Panc1 (cell line): ENCODE measurements at regions of chr6 and their contacts with region 1.

Region 1: DNA sequence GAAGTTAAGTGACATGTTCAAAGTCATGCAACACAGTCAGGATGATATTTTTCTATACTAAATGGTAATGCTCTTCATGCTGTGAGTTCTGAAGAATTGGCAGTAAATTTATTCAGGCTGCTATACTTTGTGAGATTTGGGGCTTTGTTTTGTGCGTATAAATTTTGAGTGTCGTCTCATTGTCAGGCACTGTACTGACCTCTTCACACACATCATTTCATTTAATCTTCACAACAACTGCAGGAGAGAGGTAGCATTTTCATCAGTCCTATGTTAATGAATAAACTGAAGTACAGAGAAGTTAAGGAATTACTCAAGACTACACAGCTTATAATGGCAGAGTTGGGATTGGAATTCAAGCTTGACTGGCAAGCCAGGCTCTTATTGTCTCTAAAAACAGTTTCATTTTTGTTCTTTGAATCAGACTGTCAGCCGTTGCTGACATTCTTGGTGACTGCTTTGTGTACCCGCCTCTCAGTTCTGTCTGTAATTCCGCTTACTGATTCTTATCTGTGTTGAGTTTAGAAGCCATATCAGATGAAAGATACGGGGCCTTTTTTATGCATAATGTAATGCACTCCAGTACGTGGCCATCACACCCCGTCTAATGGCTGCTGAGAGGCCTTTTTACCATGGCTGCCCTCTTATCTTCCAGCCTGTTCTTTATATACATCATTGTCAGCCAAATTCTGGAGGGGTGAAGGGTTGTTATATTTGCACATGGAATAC is 274.9 kb downstream of the UTRN start:
- DNase-seq: no peak
- ATAC-seq: peak; percentile 91
- H3K4me3 ChIP-seq: no peak overlapping the region
- H3K27ac ChIP-seq: no peak overlapping the region
- H3K4me1 ChIP-seq: peaks cover 10% of the 10 kb centered on the region
- H3K27me3 ChIP-seq: no peaks in the 10 kb centered on the region
- CTCF ChIP-seq: no peak

Region 2: DNA sequence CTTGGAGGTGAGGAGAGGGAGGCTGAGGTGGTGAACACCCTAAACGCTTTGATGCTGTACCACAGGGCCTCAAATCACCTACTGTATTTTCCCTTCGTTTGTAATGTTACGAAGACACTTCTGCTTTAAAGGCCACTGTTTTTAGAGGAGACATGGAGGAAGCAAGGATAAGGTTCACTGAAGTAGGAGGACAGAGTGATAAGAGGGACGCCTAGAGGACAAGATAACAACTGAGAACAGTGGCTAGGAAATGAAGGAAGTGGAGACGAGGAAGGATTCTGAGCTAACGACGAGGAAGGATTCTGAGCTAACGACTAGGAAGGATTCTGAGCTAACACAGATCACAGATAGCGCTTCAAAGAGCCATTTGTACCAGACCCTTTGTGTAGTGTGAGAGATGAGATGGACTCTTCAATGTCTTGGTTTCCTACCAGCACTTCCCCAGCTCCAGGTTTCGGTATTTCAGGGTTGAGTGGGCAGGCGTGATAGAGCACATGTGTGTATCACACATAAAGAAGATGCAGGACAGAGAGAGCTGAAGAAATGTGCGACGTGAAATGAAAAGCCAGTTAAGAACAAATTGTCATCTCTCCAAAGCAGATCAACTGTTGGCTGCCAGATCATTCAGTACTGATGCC is 472.1 kb before region 1 on chr6:
- CTCF ChIA-PET with region 1: no interaction called
- POLR2A ChIA-PET with region 1: no interaction called
- in situ Hi-C with region 1: no loop called
- intact Hi-C with region 1: no loop called
- DNase-seq: no peak
- ATAC-seq: no peak
- H3K4me3 ChIP-seq: no peak overlapping the region
- H3K27ac ChIP-seq: no peak overlapping the region
- H3K4me1 ChIP-seq: no peaks in the 10 kb centered on the region
- H3K27me3 ChIP-seq: no peaks in the 10 kb centered on the region
- CTCF ChIP-seq: no peak

Region 3: GRCh38 chr6:144546807-144547206 is 13.2 kb before region 1 on chr6:
- CTCF ChIA-PET with region 1: no interaction called
- POLR2A ChIA-PET with region 1: interaction called, 10 read pairs
- in situ Hi-C with region 1: no loop called
- intact Hi-C with region 1: no loop called
- DNase-seq: no peak
- ATAC-seq: no peak
- H3K4me3 ChIP-seq: no peak overlapping the region
- H3K27ac ChIP-seq: no peak overlapping the region
- H3K4me1 ChIP-seq: no peaks in the 10 kb centered on the region
- H3K27me3 ChIP-seq: no peaks in the 10 kb centered on the region
- CTCF ChIP-seq: no peak

Region 4: GRCh38 chr6:145161501-145161900 is 601.5 kb after region 1 on chr6:
- CTCF ChIA-PET with region 1: no interaction called
- POLR2A ChIA-PET with region 1: no interaction called
- in situ Hi-C with region 1: no loop called
- intact Hi-C with region 1: no loop called
- DNase-seq: no peak
- ATAC-seq: no peak
- H3K4me3 ChIP-seq: no peak overlapping the region
- H3K27ac ChIP-seq: no peak overlapping the region
- H3K4me1 ChIP-seq: no peaks in the 10 kb centered on the region
- H3K27me3 ChIP-seq: no peaks in the 10 kb centered on the region
- CTCF ChIP-seq: no peak